Head of caudate nucleus (tissue), 42 donors: ENCODE measurements at regions of chr14 and their contacts with region 1.

Region 1: GRCh38 chr14:89973234-89973823 is 17.6 kb downstream of the TDP1 start:
- DNase-seq: peak; percentile 49 to 93 (median 85)

Region 2: GRCh38 chr14:90060312-90060964 is 87.1 kb after region 1 on chr14:
- intact Hi-C with region 1: loop called (anchors 5 kb)
- DNase-seq: peak; percentile 35 to 92 (median 80)

Region 3: DNA sequence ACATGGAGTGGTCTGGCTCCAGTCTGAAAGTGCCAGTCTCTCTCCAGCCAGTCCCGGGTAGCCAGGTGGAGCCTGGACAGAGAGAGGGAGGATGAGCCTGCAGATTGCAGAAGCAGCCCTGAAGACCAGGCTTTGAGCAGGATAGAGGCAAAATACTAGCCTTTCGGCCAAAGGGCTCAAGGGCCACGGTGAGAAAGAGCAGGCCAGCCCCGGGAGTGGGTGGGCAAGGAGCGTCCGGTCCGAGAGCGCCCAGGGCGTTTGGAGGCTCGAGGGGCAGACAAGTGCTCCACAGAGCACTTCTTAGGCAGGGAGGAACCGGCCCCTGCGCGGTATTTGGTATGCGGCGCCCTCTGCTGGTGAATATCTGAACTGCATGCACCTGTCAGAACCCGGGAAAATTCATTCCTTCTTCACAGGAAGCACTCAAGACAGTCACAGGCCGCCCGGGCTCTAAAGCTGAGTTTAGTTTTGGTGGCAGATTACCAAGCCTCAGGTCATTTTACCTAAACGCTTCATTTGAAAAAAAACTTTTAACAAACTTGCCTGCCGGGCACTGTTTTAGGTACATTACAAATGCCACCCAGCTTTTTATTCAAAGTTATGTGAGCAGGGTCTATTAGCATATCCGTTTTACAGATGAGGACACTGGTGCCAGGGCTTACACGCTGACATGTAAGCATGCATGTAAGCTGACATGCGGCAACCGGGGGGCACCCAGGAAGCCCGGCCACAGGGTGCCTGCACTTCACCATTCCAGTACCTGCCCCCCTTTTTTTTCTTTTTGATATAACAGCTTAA is 262.0 kb after region 1 on chr14:
- intact Hi-C with region 1: loop called (anchors 10 kb)
- DNase-seq: peak; percentile 38 to 90 (median 76)